H1 (cell line): ENCODE measurements at regions of chr4 and their contacts with region 1.

Region 1: GRCh38 chr4:3073136-3074077 is 931 bp downstream of the HTT-AS start:
- DNase-seq: no peak
- H3K4me3 ChIP-seq: peak overlapping the region; percentile 75 to 87 (median 82)
- H3K27ac ChIP-seq: no peak overlapping the region
- H3K4me1 ChIP-seq: peaks cover 2 to 5% (median 3%) of the 10 kb centered on the region in 4 experiments; a peak in 6 of 7 replicates
- H3K27me3 ChIP-seq: no peaks in the 10 kb centered on the region
- CTCF ChIP-seq: no peak
- EP300 ChIP-seq: no peak
- POLR2A ChIP-seq: peak in 1 of 2 experiments; percentile 30; a peak in 1 of 3 replicates
- RAD21 ChIP-seq: no peak

Region 2: DNA sequence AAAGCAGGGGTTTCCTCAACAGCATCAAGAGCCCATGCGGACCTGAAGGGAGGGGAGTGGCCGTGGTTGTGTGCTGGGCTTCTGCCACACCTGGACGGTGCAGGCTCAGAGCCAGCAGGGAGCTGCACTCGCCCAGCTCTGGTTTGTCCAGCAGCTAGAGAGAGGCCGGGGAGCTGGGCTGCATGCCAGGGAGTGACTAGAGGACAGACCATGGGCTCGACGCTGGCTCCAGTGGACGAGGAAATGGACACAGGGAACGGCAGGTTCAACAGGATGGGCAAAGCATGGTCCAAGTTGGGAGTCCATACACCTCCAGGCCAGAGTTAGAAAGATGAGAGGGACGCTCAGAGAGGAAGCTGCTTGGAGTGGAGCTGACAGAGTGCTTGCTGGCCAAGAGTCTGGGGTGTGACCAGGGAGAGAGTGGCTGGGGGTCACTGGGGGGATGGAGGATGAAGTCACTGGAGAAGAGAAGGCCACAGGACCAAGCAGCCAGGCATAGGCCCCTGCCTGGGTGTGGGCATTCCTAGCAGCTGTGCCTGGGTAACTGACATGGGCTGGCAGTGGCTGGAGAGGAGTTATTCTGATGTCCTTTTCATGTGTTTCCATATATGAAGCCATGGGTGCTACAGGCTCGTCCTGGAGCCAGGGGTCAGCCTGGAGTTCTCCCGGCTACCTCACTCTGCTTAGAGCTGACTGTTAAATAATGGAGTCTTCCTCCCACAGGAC is 41.9 kb before region 1 on chr4:
- CTCF ChIA-PET with region 1: no interaction called
- POLR2A ChIA-PET with region 1: no interaction called
- DNase-seq: no peak
- H3K4me3 ChIP-seq: no peak overlapping the region
- H3K27ac ChIP-seq: no peak overlapping the region
- H3K4me1 ChIP-seq: no peaks in the 10 kb centered on the region
- H3K27me3 ChIP-seq: no peaks in the 10 kb centered on the region; a peak in 2 of 7 replicates
- CTCF ChIP-seq: no peak
- EP300 ChIP-seq: no peak
- POLR2A ChIP-seq: no peak
- RAD21 ChIP-seq: no peak

Region 3: DNA sequence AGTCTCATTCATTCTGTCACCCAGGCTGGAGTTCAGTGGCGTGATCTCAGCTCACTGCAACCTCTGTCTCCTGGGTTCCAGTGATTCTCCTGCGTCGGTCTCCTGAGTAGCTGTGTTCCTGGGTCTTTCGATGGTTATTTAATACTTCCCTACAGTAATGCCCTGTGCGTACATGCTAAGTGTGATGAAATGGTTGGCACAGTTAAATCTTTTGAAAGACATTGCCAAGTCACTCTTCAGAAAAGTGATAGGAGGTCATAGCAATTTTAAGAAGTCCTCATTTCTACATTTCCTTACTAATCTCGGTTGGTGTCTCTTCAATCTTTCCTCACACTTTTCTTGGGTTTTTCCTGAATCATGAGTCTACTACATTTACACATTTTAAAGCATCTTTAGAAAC is 13.5 kb before region 1 on chr4:
- CTCF ChIA-PET with region 1: interaction called, 12 read pairs
- POLR2A ChIA-PET with region 1: interaction called, 4 read pairs
- DNase-seq: no peak
- H3K4me3 ChIP-seq: no peak overlapping the region
- H3K27ac ChIP-seq: no peak overlapping the region
- H3K4me1 ChIP-seq: no peaks in the 10 kb centered on the region
- H3K27me3 ChIP-seq: no peaks in the 10 kb centered on the region
- CTCF ChIP-seq: no peak
- EP300 ChIP-seq: no peak
- POLR2A ChIP-seq: no peak
- RAD21 ChIP-seq: no peak

Region 4: GRCh38 chr4:3098346-3098745 is 24.9 kb after region 1 on chr4:
- CTCF ChIA-PET with region 1: no interaction called
- POLR2A ChIA-PET with region 1: no interaction called
- DNase-seq: no peak
- H3K4me3 ChIP-seq: no peak overlapping the region
- H3K27ac ChIP-seq: no peak overlapping the region
- H3K4me1 ChIP-seq: no peaks in the 10 kb centered on the region
- H3K27me3 ChIP-seq: no peaks in the 10 kb centered on the region
- CTCF ChIP-seq: no peak
- EP300 ChIP-seq: no peak
- POLR2A ChIP-seq: no peak
- RAD21 ChIP-seq: no peak

Region 5: DNA sequence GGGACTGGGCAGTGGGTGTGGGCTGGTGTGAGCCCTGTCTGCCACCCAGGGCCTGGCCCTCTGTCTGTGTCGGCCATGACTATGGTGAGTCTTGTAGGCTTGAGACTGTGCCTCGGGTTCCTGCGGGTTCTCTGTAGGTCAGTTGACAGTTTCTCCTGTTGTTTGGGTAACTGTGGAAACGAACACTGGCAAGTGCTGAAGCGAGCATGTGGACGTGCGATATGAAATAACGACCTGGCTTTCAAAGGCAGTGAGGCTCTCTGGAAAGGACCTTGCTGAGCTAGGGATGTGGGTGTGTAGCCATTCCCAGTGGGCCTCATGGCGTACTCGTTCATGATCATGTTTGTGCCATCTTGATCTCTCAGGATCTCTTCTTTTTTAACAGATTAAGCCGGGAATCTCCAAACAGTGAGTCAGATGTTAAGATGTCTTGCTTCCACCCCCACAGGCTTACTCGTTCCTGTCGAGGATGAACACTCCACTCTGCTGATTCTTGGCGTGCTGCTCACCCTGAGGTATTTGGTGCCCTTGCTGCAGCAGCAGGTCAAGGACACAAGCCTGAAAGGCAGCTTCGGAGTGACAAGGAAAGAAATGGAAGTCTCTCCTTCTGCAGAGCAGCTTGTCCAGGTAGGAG is 42.3 kb after region 1 on chr4:
- CTCF ChIA-PET with region 1: no interaction called
- POLR2A ChIA-PET with region 1: no interaction called
- DNase-seq: no peak
- H3K4me3 ChIP-seq: no peak overlapping the region
- H3K27ac ChIP-seq: no peak overlapping the region
- H3K4me1 ChIP-seq: no peaks in the 10 kb centered on the region
- H3K27me3 ChIP-seq: no peaks in the 10 kb centered on the region
- CTCF ChIP-seq: no peak
- EP300 ChIP-seq: no peak
- POLR2A ChIP-seq: no peak
- RAD21 ChIP-seq: no peak

Region 6: DNA sequence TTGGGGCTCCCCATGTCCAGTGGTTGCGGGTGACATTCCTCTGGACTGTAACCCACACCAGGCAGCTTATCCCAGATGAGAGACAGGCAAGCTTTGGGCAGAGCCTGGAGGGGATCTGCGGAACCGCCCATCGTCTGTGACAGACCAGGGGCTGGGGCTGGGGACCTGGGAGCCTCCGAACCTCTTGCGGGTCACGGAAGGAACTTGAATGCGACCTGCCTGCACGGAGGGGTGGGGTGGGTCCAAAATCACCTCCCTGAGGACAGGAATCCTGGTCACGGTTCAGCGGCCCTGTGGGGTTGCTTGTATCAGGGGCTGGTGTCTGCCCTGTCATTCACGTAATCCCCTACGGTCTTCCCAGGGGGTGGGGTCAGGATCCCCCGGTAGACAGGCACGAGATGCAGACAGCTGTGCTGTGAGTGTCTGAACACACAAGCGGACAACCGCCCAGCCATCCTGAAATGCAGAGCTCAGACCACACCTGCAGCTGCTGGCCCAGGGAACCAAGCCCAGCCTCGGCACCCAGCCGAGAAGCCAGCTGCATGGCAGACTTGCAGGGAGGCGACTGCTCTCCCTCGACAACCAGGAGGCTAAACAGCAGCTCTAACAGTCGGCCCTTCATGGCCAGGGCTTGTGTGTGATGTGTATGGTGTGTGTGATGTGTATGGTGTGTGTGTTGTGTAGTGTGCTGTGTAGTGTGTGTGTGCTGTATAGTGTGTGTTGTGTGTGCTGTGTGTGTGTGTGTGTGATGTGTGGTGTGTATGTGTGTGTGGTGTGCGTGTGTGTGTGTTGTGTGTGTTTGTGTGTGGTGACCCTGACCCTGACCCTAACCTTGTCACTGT is 586.9 kb after region 1 on chr4:
- CTCF ChIA-PET with region 1: no interaction called
- POLR2A ChIA-PET with region 1: no interaction called
- DNase-seq: no peak
- H3K4me3 ChIP-seq: no peak overlapping the region
- H3K27ac ChIP-seq: no peak overlapping the region; the same call in 1 of the 2 replicates
- H3K4me1 ChIP-seq: peaks cover 0 to 6% (median 5%) of the 10 kb centered on the region in 4 experiments; a peak in 4 of 7 replicates
- H3K27me3 ChIP-seq: peaks cover 0 to 5% (median 0%) of the 10 kb centered on the region in 4 experiments; a peak in 1 of 7 replicates
- CTCF ChIP-seq: no peak
- EP300 ChIP-seq: no peak
- POLR2A ChIP-seq: no peak
- RAD21 ChIP-seq: no peak